Pancreas (tissue), 10 donors: ENCODE measurements at regions of chr1 and their contacts with region 1.

Region 1: GRCh38 chr1:182391362-182392044 is at the start of gene GLUL:
- DNase-seq: peak; percentile 90 to 98 (median 94)
- ATAC-seq: peak; percentile 84 to 91 (median 88)
- H3K4me3 ChIP-seq: peak within 1 kb of the TSS; percentile 80 to 95 (median 90)
- H3K27ac ChIP-seq: peak within 1 kb of the TSS; percentile 92 to 99 (median 96)
- H3K4me1 ChIP-seq: peaks cover 2 to 17% (median 17%) of the 10 kb centered on the region in 3 donors
- H3K27me3 ChIP-seq: no peaks in the 10 kb centered on the region
- CTCF ChIP-seq: peak in 1 of 4 donors; percentile 29
- total RNA-seq, gene GLUL: 261 to 512 (median 332) TPM

Region 2: GRCh38 chr1:182113879-182114626 is 277.4 kb before region 1 on chr1:
- intact Hi-C with region 1: no loop called
- DNase-seq: no peak
- ATAC-seq: peak in 2 of 4 donors; percentile 66 to 67
- H3K4me3 ChIP-seq: no peak overlapping the region
- H3K27ac ChIP-seq: peak overlapping the region in 1 of 4 donors; percentile 2
- H3K4me1 ChIP-seq: no peaks in the 10 kb centered on the region
- H3K27me3 ChIP-seq: no peaks in the 10 kb centered on the region
- CTCF ChIP-seq: no peak

Region 3: GRCh38 chr1:182309631-182310351 is 81.7 kb before region 1 on chr1:
- intact Hi-C with region 1: loop called in 1 of 3 experiments (anchors 5 kb)
- DNase-seq: no peak
- ATAC-seq: peak in 3 of 4 donors; percentile 37 to 40 (median 40)
- H3K4me3 ChIP-seq: no peak overlapping the region
- H3K27ac ChIP-seq: no peak overlapping the region
- H3K4me1 ChIP-seq: peaks cover 3 to 10% (median 8%) of the 10 kb centered on the region in 3 donors
- H3K27me3 ChIP-seq: no peaks in the 10 kb centered on the region
- CTCF ChIP-seq: no peak